Tibial artery (tissue), 4 donors: ENCODE measurements at regions of chr9 and their contacts with region 1.

Region 1: DNA sequence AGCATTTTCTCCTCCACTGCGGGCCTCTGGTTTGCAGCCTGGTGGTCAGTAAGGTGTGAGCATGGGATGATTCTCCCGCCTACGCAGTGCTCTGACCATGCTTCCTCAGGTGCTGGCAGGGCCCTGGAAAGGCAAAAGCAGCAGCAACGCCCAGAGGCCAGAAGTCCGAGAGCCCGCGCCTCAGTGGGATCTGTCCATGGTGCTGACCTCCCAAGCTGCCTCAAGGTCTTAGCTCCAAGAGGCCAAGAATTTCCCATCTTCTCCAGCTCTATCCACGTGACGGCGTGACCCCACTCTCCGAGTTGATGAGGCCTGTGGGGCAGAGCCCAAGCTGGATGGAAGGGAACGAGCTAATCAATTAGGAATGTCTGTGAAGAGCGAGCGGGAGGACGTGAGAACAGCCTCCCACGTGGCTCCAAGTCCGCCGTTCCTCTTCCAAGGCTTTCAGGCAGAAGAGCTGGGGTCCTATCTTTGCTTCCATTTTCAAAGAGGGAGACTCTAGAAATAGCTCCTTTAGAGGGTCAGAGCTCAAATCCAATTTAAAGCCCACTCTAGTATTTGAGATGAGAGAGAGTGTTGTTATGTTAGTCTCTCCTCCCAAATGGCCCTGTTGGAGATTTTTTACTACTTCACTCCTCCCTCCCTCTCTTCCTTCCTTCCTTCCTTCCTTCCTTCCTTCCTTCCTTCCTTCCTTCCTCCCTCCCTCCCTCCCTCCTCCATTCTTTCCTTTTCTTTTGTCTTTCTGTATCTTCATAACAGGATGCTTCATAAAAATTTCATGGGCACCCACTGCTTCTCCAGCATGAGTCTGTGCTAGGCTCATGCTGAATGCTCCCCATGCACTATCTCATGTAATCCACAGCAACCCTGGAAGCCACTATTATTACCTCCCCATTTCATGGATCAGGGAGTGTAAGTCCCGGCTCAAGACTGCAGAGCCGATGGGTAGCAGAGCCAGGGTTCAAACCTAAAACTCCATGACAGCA is 69.3 kb downstream of the OLFM1 start:
- DNase-seq: no peak
- H3K4me3 ChIP-seq: no peak overlapping the region
- H3K27ac ChIP-seq: no peak overlapping the region
- H3K4me1 ChIP-seq: no peaks in the 10 kb centered on the region
- H3K27me3 ChIP-seq: peaks cover 0 to 66% of the 10 kb centered on the region in 2 donors
- CTCF ChIP-seq: no peak

Region 2: GRCh38 chr9:135524130-135524861 is 367.5 kb after region 1 on chr9:
- intact Hi-C with region 1: no loop called
- DNase-seq: peak in 1 of 2 donors; percentile 51
- H3K4me3 ChIP-seq: no peak overlapping the region
- H3K27ac ChIP-seq: no peak overlapping the region
- H3K4me1 ChIP-seq: no peaks in the 10 kb centered on the region
- H3K27me3 ChIP-seq: peaks cover 0 to 61% of the 10 kb centered on the region in 2 donors
- CTCF ChIP-seq: no peak

Region 3: GRCh38 chr9:135898634-135899407 is 742.0 kb after region 1 on chr9:
- intact Hi-C with region 1: loop called (anchors 10 kb)
- DNase-seq: no peak
- H3K4me3 ChIP-seq: no peak overlapping the region
- H3K27ac ChIP-seq: no peak overlapping the region
- H3K4me1 ChIP-seq: peaks cover 0 to 7% (median 0%) of the 10 kb centered on the region in 4 donors
- H3K27me3 ChIP-seq: no peaks in the 10 kb centered on the region
- CTCF ChIP-seq: no peak